Right lobe of liver (tissue), 6 donors: ENCODE measurements at regions of chr7 and their contacts with region 1.

Region 1: DNA sequence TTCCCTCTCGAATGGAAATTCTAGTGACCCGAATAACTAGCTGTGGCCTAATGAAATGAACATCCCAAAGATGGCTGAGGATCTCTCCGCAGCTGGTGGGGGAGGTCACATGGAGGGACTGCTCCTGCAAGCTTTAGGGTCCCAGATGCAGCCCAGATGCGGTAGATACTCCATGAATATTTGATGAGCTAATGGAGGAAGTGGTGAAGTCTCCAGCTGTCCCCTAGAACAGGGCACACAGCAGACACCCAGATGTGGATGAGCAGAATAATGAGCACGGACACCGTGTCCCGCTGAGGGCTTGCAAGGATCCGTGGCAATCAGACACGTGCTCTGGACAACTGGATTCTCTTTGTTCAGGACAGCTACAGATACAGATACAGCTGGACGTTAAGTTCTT is 59.2 kb downstream of the DENND2A start:
- DNase-seq: no peak
- ATAC-seq: no peak
- H3K4me3 ChIP-seq: no peak overlapping the region
- H3K27ac ChIP-seq: no peak overlapping the region
- H3K4me1 ChIP-seq: no peaks in the 10 kb centered on the region
- H3K27me3 ChIP-seq: no peaks in the 10 kb centered on the region
- CTCF ChIP-seq: no peak
- POLR2A ChIP-seq: no peak

Region 2: DNA sequence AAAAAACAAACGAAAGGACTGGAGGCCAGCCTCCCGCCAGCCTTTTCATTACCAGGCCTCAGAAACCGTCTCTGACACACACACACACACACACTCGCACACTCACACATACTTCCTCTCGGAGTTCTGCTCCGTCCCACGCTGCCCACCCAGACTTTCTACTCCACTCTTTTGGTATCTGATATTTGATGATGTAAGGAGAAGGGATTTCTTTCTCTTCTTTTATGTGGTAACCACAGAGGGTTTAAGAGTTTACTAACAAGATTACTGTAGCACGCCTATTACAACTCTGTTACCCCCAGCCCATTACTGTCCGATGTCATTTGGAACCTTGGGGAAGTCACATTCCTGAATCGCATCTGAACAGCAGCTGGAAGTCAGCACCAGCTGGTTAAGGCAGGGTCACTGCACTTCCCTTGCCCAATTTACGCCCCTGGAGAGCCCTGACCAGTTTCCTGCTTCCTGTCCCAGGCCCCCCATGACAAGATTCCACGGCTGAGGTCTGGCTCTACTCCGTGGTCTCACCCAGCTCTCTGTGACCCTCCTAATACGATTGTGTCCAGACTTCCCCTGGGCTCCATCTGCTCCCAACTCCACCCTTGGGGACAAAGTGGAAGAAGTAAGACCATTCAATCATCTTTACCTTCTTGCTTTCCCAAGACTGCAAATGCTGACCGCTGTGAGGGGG is 58.1 kb after region 1 on chr7:
- intact Hi-C with region 1: loop called in 1 of 2 experiments (anchors 10 kb)
- DNase-seq: no peak
- ATAC-seq: peak; percentile 6 to 42 (median 34)
- H3K4me3 ChIP-seq: peak overlapping the region; percentile 39 to 47 (median 40)
- H3K27ac ChIP-seq: peak overlapping the region in 2 of 3 donors; percentile 59 to 70
- H3K4me1 ChIP-seq: no peaks in the 10 kb centered on the region
- H3K27me3 ChIP-seq: peaks cover 0 to 4% of the 10 kb centered on the region in 2 donors
- CTCF ChIP-seq: no peak
- POLR2A ChIP-seq: no peak

Region 3: GRCh38 chr7:140841166-140841715 is 259.8 kb after region 1 on chr7:
- intact Hi-C with region 1: no loop called
- DNase-seq: no peak
- ATAC-seq: no peak
- H3K4me3 ChIP-seq: no peak overlapping the region
- H3K27ac ChIP-seq: no peak overlapping the region
- H3K4me1 ChIP-seq: no peaks in the 10 kb centered on the region
- H3K27me3 ChIP-seq: no peaks in the 10 kb centered on the region
- CTCF ChIP-seq: no peak
- POLR2A ChIP-seq: no peak